CD4-positive, alpha-beta T cell (primary cell): ENCODE measurements at regions of chr2 and their contacts with region 1.

Region 1: DNA sequence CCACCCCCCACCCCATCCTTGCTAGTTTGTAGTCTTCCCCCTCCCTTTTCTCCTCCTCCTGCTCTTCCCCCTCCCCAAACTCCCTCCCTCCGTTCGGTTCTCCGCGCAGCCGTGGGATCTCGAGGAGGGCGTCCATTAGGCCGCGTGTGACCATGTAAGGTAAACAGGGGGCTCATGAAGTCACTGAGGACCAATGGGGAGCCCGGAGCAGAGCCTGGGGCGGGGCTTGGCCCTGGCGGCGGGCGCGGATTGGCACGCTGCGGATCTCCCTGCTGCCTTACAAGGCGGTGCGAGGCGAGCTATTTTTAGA is 246 bp upstream of the KLF7 start:
- DNase-seq: peak; percentile 89 to 97 (median 95)
- ATAC-seq: peak; percentile 88
- H3K4me3 ChIP-seq: peak overlapping the region; percentile 71
- H3K4me3 Mint-ChIP-seq: peak overlapping the region; percentile 99
- H3K27ac ChIP-seq: peak overlapping the region; percentile 95 to 99
- H3K27ac Mint-ChIP-seq: peak overlapping the region; percentile 97
- H3K4me1 ChIP-seq: peaks cover 37% of the 10 kb centered on the region
- H3K4me1 Mint-ChIP-seq: peaks cover 53% of the 10 kb centered on the region
- H3K27me3 ChIP-seq: no peaks in the 10 kb centered on the region
- H3K27me3 Mint-ChIP-seq: no peaks in the 10 kb centered on the region
- CTCF ChIP-seq: no peak

Region 2: GRCh38 chr2:207046724-207047123 is 119.3 kb before region 1 on chr2:
- CTCF ChIA-PET with region 1: no interaction called
- POLR2A ChIA-PET with region 1: interaction called, 12 read pairs
- intact Hi-C with region 1: loop called in 1 of 2 experiments (anchors 2 kb)
- DNase-seq: peak in 11 of 14 experiments; percentile 3 to 70 (median 12)
- ATAC-seq: peak; percentile 86
- H3K4me3 ChIP-seq: no peak overlapping the region
- H3K4me3 Mint-ChIP-seq: no peak overlapping the region
- H3K27ac ChIP-seq: no peak overlapping the region
- H3K27ac Mint-ChIP-seq: no peak overlapping the region
- H3K4me1 ChIP-seq: peaks cover 6% of the 10 kb centered on the region
- H3K4me1 Mint-ChIP-seq: peaks cover 10% of the 10 kb centered on the region
- H3K27me3 ChIP-seq: no peaks in the 10 kb centered on the region
- H3K27me3 Mint-ChIP-seq: no peaks in the 10 kb centered on the region
- CTCF ChIP-seq: peak; percentile 63

Region 3: DNA sequence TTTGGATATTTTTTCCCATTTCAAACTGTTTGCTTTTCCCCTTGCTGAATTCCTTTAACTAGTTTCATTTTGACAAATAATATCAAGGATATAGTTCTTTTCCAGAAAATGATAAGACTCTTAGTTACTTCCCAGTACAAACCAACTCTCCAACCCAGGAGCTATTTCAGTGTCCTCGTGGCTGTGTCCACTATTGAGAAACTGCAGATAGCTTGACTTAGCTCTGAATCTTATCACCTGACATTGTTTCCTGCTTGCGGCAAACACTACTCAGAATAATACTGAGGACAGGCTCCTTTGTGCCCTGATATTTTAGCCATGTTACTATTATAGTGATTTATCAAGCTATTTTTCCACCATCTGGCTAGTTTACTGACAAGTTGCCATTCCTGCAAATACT is 74.8 kb before region 1 on chr2:
- CTCF ChIA-PET with region 1: no interaction called
- POLR2A ChIA-PET with region 1: interaction called, 25 read pairs
- intact Hi-C with region 1: loop called (anchors 5 kb)
- DNase-seq: no peak
- ATAC-seq: no peak
- H3K4me3 ChIP-seq: no peak overlapping the region
- H3K4me3 Mint-ChIP-seq: no peak overlapping the region
- H3K27ac ChIP-seq: no peak overlapping the region
- H3K27ac Mint-ChIP-seq: no peak overlapping the region
- H3K4me1 ChIP-seq: peaks cover 12% of the 10 kb centered on the region
- H3K4me1 Mint-ChIP-seq: peaks cover 62% of the 10 kb centered on the region
- H3K27me3 ChIP-seq: no peaks in the 10 kb centered on the region
- H3K27me3 Mint-ChIP-seq: no peaks in the 10 kb centered on the region
- CTCF ChIP-seq: no peak

Region 4: GRCh38 chr2:207133820-207134519 is 32.0 kb before region 1 on chr2:
- CTCF ChIA-PET with region 1: no interaction called
- POLR2A ChIA-PET with region 1: interaction called, 463 read pairs
- intact Hi-C with region 1: loop called (anchors 5 kb)
- DNase-seq: no peak
- ATAC-seq: no peak
- H3K4me3 ChIP-seq: no peak overlapping the region
- H3K4me3 Mint-ChIP-seq: no peak overlapping the region
- H3K27ac ChIP-seq: no peak overlapping the region
- H3K27ac Mint-ChIP-seq: peak overlapping the region; percentile 77
- H3K4me1 ChIP-seq: peaks cover 38% of the 10 kb centered on the region
- H3K4me1 Mint-ChIP-seq: peaks cover 79% of the 10 kb centered on the region
- H3K27me3 ChIP-seq: no peaks in the 10 kb centered on the region
- H3K27me3 Mint-ChIP-seq: no peaks in the 10 kb centered on the region
- CTCF ChIP-seq: no peak

Region 5: GRCh38 chr2:207176247-207176646 is 10.3 kb after region 1 on chr2:
- CTCF ChIA-PET with region 1: interaction called, 4 read pairs
- POLR2A ChIA-PET with region 1: interaction called, 18 read pairs
- intact Hi-C with region 1: no loop called
- DNase-seq: no peak
- ATAC-seq: no peak
- H3K4me3 ChIP-seq: no peak overlapping the region
- H3K4me3 Mint-ChIP-seq: no peak overlapping the region
- H3K27ac ChIP-seq: no peak overlapping the region
- H3K27ac Mint-ChIP-seq: no peak overlapping the region
- H3K4me1 ChIP-seq: no peaks in the 10 kb centered on the region
- H3K4me1 Mint-ChIP-seq: no peaks in the 10 kb centered on the region
- H3K27me3 ChIP-seq: no peaks in the 10 kb centered on the region
- H3K27me3 Mint-ChIP-seq: no peaks in the 10 kb centered on the region
- CTCF ChIP-seq: no peak

Region 6: GRCh38 chr2:208254871-208255556 is 1089.0 kb after region 1 on chr2 and contains the start of gene IDH1:
- CTCF ChIA-PET with region 1: no interaction called
- POLR2A ChIA-PET with region 1: interaction called, 3 read pairs
- intact Hi-C with region 1: loop called in 1 of 2 experiments (anchors 5 kb)
- DNase-seq: peak; percentile 87 to 98 (median 92)
- ATAC-seq: peak; percentile 80
- H3K4me3 ChIP-seq: peak within 1 kb of the TSS; percentile 86
- H3K4me3 Mint-ChIP-seq: peak within 1 kb of the TSS; percentile 100
- H3K27ac ChIP-seq: peak within 1 kb of the TSS; percentile 37 to 53
- H3K27ac Mint-ChIP-seq: peak within 1 kb of the TSS; percentile 74
- H3K4me1 ChIP-seq: peaks cover 20% of the 10 kb centered on the region
- H3K4me1 Mint-ChIP-seq: peaks cover 25% of the 10 kb centered on the region
- H3K27me3 ChIP-seq: no peaks in the 10 kb centered on the region
- H3K27me3 Mint-ChIP-seq: no peaks in the 10 kb centered on the region
- CTCF ChIP-seq: no peak
- total RNA-seq, gene IDH1: 3.0 to 3.4 TPM